CD4-positive, alpha-beta T cell (primary cell): ENCODE measurements at regions of chr6 and their contacts with region 1.

Region 1: GRCh38 chr6:137866914-137867684 is at the start of gene TNFAIP3:
- DNase-seq: peak; percentile 88 to 99 (median 93)
- ATAC-seq: peak; percentile 69
- H3K4me3 ChIP-seq: peak within 1 kb of the TSS; percentile 90
- H3K4me3 Mint-ChIP-seq: peak within 1 kb of the TSS; percentile 96
- H3K27ac ChIP-seq: peak within 1 kb of the TSS; percentile 96 to 98
- H3K27ac Mint-ChIP-seq: peak within 1 kb of the TSS; percentile 95
- H3K4me1 ChIP-seq: peaks cover 30% of the 10 kb centered on the region
- H3K4me1 Mint-ChIP-seq: peaks cover 64% of the 10 kb centered on the region
- H3K27me3 ChIP-seq: no peaks in the 10 kb centered on the region
- H3K27me3 Mint-ChIP-seq: peaks cover 4% of the 10 kb centered on the region
- CTCF ChIP-seq: peak; percentile 45
- total RNA-seq, gene TNFAIP3: 3,816 to 3,885 TPM

Region 2: GRCh38 chr6:136289579-136290409 is 1577.3 kb before region 1 on chr6 and contains the start of gene BCLAF1:
- CTCF ChIA-PET with region 1: no interaction called
- POLR2A ChIA-PET with region 1: interaction called, 17 read pairs
- intact Hi-C with region 1: no loop called
- DNase-seq: peak; percentile 99 to 100 (median 99)
- ATAC-seq: peak; percentile 70
- H3K4me3 ChIP-seq: peak within 1 kb of the TSS; percentile 88
- H3K4me3 Mint-ChIP-seq: peak within 1 kb of the TSS; percentile 97
- H3K27ac ChIP-seq: peak within 1 kb of the TSS; percentile 100
- H3K27ac Mint-ChIP-seq: peak within 1 kb of the TSS; percentile 99
- H3K4me1 ChIP-seq: peaks cover 52% of the 10 kb centered on the region
- H3K4me1 Mint-ChIP-seq: peaks cover 47% of the 10 kb centered on the region
- H3K27me3 ChIP-seq: no peaks in the 10 kb centered on the region
- H3K27me3 Mint-ChIP-seq: peaks cover 3% of the 10 kb centered on the region
- CTCF ChIP-seq: peak; percentile 7
- total RNA-seq, gene BCLAF1: 484 to 501 TPM

Region 3: DNA sequence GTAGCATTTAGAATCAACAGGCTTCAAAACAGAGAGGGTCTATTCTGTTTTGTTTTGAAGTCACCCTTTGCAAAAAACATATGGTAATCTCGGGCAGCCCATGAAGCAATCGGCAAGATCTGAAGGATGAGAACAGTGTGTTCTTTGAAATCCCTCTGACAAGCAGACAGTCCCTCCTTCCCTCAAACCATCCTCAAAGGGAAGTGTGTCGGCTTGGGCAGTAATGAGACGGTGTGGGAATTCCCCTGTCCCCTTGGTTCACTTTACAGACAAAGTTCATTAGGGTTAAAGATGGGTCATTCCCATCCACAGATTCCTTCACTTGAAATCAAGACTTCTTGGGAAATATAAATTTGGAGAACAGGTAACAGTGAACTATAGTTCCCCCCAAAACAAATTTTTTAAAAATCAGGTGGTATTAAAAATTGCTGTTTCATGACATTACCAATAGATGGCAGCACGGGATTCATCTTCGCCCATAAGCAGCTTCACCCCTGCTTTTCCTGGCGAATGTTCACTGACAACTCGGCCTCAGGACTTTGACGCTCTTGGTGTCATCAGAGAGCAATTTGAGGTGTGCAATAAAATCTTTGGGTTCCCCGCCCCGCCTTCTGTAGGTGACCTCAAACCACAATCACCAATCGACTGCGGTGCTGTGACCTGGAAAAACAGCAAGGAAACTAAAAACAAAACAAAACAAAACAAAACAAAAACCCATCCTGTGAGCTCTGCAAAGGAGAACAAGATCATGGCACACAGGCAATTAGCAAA is 159.3 kb before region 1 on chr6:
- CTCF ChIA-PET with region 1: interaction called, 65 read pairs
- POLR2A ChIA-PET with region 1: interaction called, 66 read pairs
- intact Hi-C with region 1: loop called (anchors 1 kb)
- DNase-seq: peak; percentile 57 to 98 (median 76)
- ATAC-seq: peak; percentile 76
- H3K4me3 ChIP-seq: no peak overlapping the region
- H3K4me3 Mint-ChIP-seq: peak overlapping the region; percentile 75
- H3K27ac ChIP-seq: peak overlapping the region; percentile 67 to 89
- H3K27ac Mint-ChIP-seq: peak overlapping the region; percentile 88
- H3K4me1 ChIP-seq: peaks cover 57% of the 10 kb centered on the region
- H3K4me1 Mint-ChIP-seq: peaks cover 54% of the 10 kb centered on the region
- H3K27me3 ChIP-seq: no peaks in the 10 kb centered on the region
- H3K27me3 Mint-ChIP-seq: no peaks in the 10 kb centered on the region
- CTCF ChIP-seq: peak; percentile 79

Region 4: DNA sequence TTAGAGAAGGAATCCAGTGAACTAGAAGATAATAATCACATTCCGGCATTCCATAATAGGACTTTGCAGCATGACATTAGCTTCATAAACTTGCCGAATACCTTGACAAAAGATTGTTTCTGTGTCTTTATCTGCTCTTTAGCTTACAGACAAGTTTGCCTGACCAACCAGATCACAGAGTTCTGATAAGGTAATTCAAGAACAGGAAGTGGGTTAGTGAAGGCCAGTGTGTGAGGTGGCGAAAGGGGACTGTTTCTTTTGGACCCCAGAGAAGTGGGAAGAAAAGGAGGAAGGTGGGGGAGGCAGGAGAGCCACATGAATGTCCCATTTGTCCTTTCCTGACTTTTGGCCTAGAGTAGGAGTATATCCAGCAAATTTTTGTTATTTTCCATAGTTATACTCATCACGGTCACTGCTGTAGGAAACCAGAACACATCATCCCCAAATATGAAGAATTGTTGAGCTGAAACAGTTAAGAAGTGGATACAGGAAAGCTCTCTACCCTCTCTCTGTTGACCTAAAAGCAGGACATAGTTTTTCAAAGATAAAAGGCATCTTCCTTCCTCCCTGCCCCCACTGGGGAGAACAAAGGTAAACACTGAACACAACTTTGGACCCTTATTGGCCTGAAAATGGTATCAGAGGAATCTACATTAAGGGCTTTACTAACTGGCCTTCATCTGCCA is 72.4 kb before region 1 on chr6:
- CTCF ChIA-PET with region 1: interaction called, 52 read pairs
- POLR2A ChIA-PET with region 1: interaction called, 141 read pairs
- intact Hi-C with region 1: no loop called
- DNase-seq: peak in 1 of 14 experiments; percentile 19
- ATAC-seq: no peak
- H3K4me3 ChIP-seq: no peak overlapping the region
- H3K4me3 Mint-ChIP-seq: no peak overlapping the region
- H3K27ac ChIP-seq: peak overlapping the region in 1 of 2 donors; percentile 7
- H3K27ac Mint-ChIP-seq: peak overlapping the region; percentile 45
- H3K4me1 ChIP-seq: peaks cover 49% of the 10 kb centered on the region
- H3K4me1 Mint-ChIP-seq: peaks cover 82% of the 10 kb centered on the region
- H3K27me3 ChIP-seq: no peaks in the 10 kb centered on the region
- H3K27me3 Mint-ChIP-seq: no peaks in the 10 kb centered on the region
- CTCF ChIP-seq: no peak

Region 5: DNA sequence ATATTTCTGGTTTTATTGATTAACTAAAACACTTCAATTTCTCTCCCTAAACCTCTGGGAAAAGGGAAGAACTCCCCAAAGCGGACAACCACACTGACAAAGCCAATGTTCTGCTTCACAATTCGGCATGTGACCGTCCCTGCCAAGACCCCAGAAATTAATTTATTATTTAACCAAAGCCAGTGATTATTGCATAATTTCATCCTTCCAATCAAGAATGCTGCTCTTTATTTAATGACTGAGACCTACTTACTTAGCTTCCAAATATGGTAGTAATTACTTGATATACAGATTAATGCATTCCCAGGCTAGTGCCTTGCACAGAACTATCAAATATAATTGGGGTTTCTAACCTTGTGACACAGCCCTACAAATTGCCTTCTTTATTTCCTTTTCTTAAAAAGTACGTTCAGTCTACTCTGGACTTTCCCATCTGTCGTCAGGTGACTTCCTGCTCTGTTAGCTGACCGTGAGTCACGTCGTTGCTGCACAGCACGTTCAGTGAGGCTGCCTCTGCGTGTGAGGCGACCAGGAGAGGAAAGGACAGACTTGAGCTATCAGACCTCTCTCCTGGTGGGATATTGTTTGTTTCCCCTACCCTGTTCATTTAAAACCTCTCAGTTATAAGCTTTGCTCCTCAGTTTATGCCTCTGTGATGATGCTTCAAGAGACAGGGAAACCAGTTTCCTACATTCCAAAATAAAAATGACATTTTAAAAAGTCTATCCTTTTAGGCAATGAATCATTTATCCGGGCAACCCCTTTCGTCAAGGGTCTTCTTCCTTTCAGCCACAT is 55.8 kb before region 1 on chr6:
- CTCF ChIA-PET with region 1: interaction called, 42 read pairs
- POLR2A ChIA-PET with region 1: interaction called, 25 read pairs
- intact Hi-C with region 1: no loop called
- DNase-seq: peak; percentile 55 to 97 (median 68)
- ATAC-seq: peak; percentile 95
- H3K4me3 ChIP-seq: peak overlapping the region; percentile 5
- H3K4me3 Mint-ChIP-seq: peak overlapping the region; percentile 78
- H3K27ac ChIP-seq: peak overlapping the region; percentile 62 to 83
- H3K27ac Mint-ChIP-seq: peak overlapping the region; percentile 74
- H3K4me1 ChIP-seq: peaks cover 26% of the 10 kb centered on the region
- H3K4me1 Mint-ChIP-seq: peaks cover 49% of the 10 kb centered on the region
- H3K27me3 ChIP-seq: no peaks in the 10 kb centered on the region
- H3K27me3 Mint-ChIP-seq: no peaks in the 10 kb centered on the region
- CTCF ChIP-seq: no peak

Region 6: GRCh38 chr6:137878486-137879285 is 11.6 kb after region 1 on chr6:
- CTCF ChIA-PET with region 1: interaction called, 11 read pairs
- POLR2A ChIA-PET with region 1: interaction called, 55 read pairs
- intact Hi-C with region 1: loop called in 1 of 2 experiments (anchors 1 kb)
- DNase-seq: peak in 4 of 14 experiments; percentile 22 to 62 (median 46)
- ATAC-seq: no peak
- H3K4me3 ChIP-seq: no peak overlapping the region
- H3K4me3 Mint-ChIP-seq: peak overlapping the region; percentile 76
- H3K27ac ChIP-seq: peak overlapping the region in 1 of 2 donors; percentile 37
- H3K27ac Mint-ChIP-seq: peak overlapping the region; percentile 95
- H3K4me1 ChIP-seq: peaks cover 68% of the 10 kb centered on the region
- H3K4me1 Mint-ChIP-seq: peaks cover 88% of the 10 kb centered on the region
- H3K27me3 ChIP-seq: no peaks in the 10 kb centered on the region
- H3K27me3 Mint-ChIP-seq: peaks cover 8% of the 10 kb centered on the region
- CTCF ChIP-seq: no peak

Region 7: DNA sequence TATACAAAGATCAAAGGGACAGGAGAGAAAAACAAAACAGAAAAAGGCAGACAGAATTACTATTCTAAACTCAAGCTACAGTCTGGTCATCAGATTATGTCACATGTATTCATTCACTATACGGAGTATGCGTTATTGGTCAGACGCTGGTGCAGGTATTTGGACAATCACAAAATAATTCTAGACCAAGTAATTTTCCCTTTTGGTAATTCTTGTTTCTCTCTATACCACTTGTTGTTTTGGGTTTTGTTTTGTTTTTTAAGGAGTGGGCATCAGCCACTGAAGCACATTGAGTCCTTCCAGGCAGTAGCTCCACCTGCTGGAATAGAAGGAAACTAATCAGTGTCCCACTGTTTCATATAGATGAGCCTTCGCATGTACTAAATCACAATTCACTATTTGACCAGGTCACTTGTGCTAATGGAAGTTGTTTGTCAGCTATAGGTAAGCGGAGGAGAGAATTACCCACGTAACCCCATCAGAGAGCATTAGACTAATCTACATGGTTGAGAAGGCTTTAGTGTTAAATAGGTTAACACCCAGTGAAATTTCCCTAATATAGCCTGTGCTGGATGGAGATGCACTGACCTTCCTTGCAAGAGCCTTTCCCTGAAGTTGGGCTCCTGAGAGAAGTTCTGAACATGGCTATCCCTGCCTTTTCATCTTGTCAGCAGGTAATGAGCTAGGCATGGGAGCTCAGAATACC is 77.8 kb after region 1 on chr6:
- CTCF ChIA-PET with region 1: interaction called, 6 read pairs
- POLR2A ChIA-PET with region 1: interaction called, 22 read pairs
- intact Hi-C with region 1: loop called (anchors 1 to 5 kb)
- DNase-seq: peak in 5 of 14 experiments; percentile 10 to 69 (median 53)
- ATAC-seq: peak; percentile 71
- H3K4me3 ChIP-seq: no peak overlapping the region
- H3K4me3 Mint-ChIP-seq: no peak overlapping the region
- H3K27ac ChIP-seq: no peak overlapping the region
- H3K27ac Mint-ChIP-seq: no peak overlapping the region
- H3K4me1 ChIP-seq: peaks cover 5% of the 10 kb centered on the region
- H3K4me1 Mint-ChIP-seq: peaks cover 20% of the 10 kb centered on the region
- H3K27me3 ChIP-seq: no peaks in the 10 kb centered on the region
- H3K27me3 Mint-ChIP-seq: no peaks in the 10 kb centered on the region
- CTCF ChIP-seq: peak; percentile 96